Left colon (tissue), 2 donors: ENCODE measurements at regions of chr12 and their contacts with region 1.

Region 1: GRCh38 chr12:124767066-124767821 is 96.4 kb downstream of the SCARB1 start:
- DNase-seq: peak in 1 of 2 donors; percentile 81
- ATAC-seq: peak; percentile 72

Region 2: DNA sequence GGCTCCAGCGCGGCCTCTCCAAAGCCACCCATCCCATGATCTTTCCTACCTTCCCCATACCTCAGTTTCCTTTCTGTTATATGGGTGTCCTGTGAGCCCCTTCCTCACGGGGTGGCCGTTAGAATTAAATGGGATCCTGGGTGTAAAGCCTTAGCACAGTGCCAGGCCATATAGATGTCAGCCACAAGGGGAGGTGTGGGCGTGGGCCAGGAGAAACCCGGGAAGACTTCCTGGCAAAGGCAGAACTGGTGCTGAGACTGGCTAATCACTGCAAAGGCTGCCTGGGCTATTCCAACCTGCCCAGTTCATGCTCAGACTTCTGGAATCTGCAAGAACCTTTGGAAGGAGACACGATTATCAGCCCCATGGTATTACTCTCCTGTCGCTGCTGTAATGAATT is 188.8 kb before region 1 on chr12:
- intact Hi-C with region 1: loop called in 1 of 2 experiments (anchors 10 kb)
- DNase-seq: no peak
- ATAC-seq: peak; percentile 58